ENCODE measurements at regions of chr3 and their contacts with region 1.

Region 1: GRCh38 chr3:66488492-66488891 is 12.3 kb downstream of the LRIG1 start:
- DNase-seq: no peak
- ATAC-seq: no peak
- H3K4me3 ChIP-seq: no peak overlapping the region
- H3K4me3 Mint-ChIP-seq: no peak overlapping the region
- H3K27ac ChIP-seq: no peak overlapping the region
- H3K27ac Mint-ChIP-seq: peak overlapping the region; percentile 44
- H3K4me1 ChIP-seq: peaks cover 9 to 12% of the 10 kb centered on the region in 2 donors
- H3K4me1 Mint-ChIP-seq: peaks cover 16% of the 10 kb centered on the region
- H3K27me3 ChIP-seq: peaks cover 0 to 8% (median 0%) of the 10 kb centered on the region in 4 experiments
- H3K27me3 Mint-ChIP-seq: peaks cover 17% of the 10 kb centered on the region
- CTCF ChIP-seq: no peak

Region 2: GRCh38 chr3:66472313-66473134 is 16.0 kb before region 1 on chr3:
- CTCF ChIA-PET with region 1: interaction called, 3 read pairs
- POLR2A ChIA-PET with region 1: interaction called, 3 read pairs
- intact Hi-C with region 1: loop called (anchors 2 kb)
- DNase-seq: peak; percentile 56
- ATAC-seq: peak; percentile 81
- H3K4me3 ChIP-seq: peak overlapping the region in 1 of 5 experiments; percentile 8
- H3K4me3 Mint-ChIP-seq: peak overlapping the region; percentile 72
- H3K27ac ChIP-seq: peak overlapping the region in 1 of 2 donors; percentile 44
- H3K27ac Mint-ChIP-seq: peak overlapping the region; percentile 79
- H3K4me1 ChIP-seq: peaks cover 12 to 22% of the 10 kb centered on the region in 2 donors
- H3K4me1 Mint-ChIP-seq: peaks cover 40% of the 10 kb centered on the region
- H3K27me3 ChIP-seq: peaks cover 0 to 11% (median 0%) of the 10 kb centered on the region in 4 experiments
- H3K27me3 Mint-ChIP-seq: peaks cover 16% of the 10 kb centered on the region
- CTCF ChIP-seq: no peak